Naive thymus-derived CD4-positive, alpha-beta T cell (primary cell): ENCODE measurements at regions of chr12 and their contacts with region 1.

Region 1: DNA sequence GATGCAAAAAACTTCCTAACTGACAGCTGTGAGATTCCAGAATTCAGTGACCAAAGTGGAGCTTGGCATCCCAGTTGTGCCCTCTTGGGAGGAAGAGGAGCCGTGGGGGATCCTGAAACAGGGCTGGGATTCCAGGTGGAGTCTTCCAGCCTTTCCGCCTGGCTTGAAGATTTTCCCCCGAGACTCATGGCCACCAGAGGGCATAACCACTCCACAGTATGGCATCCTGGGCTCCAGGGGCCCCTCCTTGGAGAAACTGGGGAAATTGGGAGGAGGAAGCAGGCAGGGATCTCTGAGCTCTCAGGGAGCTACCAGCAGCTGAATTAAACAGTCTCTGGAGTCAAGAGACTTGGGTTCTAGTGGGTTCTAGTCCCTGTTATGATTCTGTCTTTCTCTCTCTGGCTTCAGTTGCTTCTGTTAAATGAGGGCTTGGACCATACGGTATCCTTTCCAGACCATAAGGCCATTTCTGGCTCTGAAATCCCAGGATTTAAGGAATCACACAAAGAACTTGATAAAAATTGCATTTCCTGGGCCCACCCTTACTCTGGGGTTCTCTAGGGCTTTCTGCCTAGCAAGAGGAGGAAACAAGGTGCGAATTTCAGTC is 2.6 kb upstream of the TAMALIN start:
- DNase-seq: no peak
- ATAC-seq: no peak
- H3K4me3 ChIP-seq: no peak overlapping the region
- H3K4me3 Mint-ChIP-seq: no peak overlapping the region
- H3K27ac ChIP-seq: no peak overlapping the region
- H3K27ac Mint-ChIP-seq: peak overlapping the region in 2 of 9 donors; percentile 24 to 67
- H3K4me1 ChIP-seq: peaks cover 0 to 11% of the 10 kb centered on the region in 2 donors
- H3K4me1 Mint-ChIP-seq: peaks cover 6 to 27% (median 19%) of the 10 kb centered on the region in 7 donors
- H3K27me3 ChIP-seq: no peaks in the 10 kb centered on the region
- H3K27me3 Mint-ChIP-seq: peaks cover 0 to 45% (median 0%) of the 10 kb centered on the region in 5 donors

Region 2: DNA sequence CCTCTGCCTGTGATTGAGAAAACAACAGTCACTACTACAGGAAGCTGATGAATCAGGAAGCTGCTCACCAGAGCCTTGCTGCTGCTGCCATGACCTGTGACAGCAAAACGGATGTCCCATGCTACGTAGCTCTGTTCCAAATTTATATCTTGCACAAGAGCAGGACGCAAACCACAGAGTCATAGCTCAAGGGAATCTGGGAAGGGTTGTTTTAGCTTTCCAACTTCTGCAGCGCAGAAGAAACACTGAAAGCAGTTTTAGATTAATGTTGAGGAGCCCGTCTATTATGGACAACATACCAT is 118.2 kb before region 1 on chr12:
- CTCF ChIA-PET with region 1: no interaction called
- POLR2A ChIA-PET with region 1: no interaction called
- intact Hi-C with region 1: loop called in 1 of 2 experiments (anchors 1 kb)
- DNase-seq: peak in 8 of 9 donors; percentile 27 to 71 (median 64)
- ATAC-seq: peak; percentile 95
- H3K4me3 ChIP-seq: peak overlapping the region; percentile 25
- H3K4me3 Mint-ChIP-seq: peak overlapping the region; percentile 8 to 77 (median 62)
- H3K27ac ChIP-seq: peak overlapping the region; percentile 1
- H3K27ac Mint-ChIP-seq: peak overlapping the region; percentile 86 to 97 (median 95)
- H3K4me1 ChIP-seq: peaks cover 0 to 5% of the 10 kb centered on the region in 2 donors
- H3K4me1 Mint-ChIP-seq: peaks cover 12 to 22% (median 16%) of the 10 kb centered on the region in 7 donors
- H3K27me3 ChIP-seq: no peaks in the 10 kb centered on the region
- H3K27me3 Mint-ChIP-seq: peaks cover 0 to 2% (median 0%) of the 10 kb centered on the region in 5 donors

Region 3: GRCh38 chr12:52139552-52140062 is 135.5 kb after region 1 on chr12:
- CTCF ChIA-PET with region 1: no interaction called
- POLR2A ChIA-PET with region 1: no interaction called
- intact Hi-C with region 1: no loop called
- DNase-seq: peak in 4 of 9 donors; percentile 25 to 39 (median 34)
- ATAC-seq: peak; percentile 89
- H3K4me3 ChIP-seq: no peak overlapping the region
- H3K4me3 Mint-ChIP-seq: no peak overlapping the region
- H3K27ac ChIP-seq: no peak overlapping the region
- H3K27ac Mint-ChIP-seq: no peak overlapping the region
- H3K4me1 ChIP-seq: no peaks in the 10 kb centered on the region
- H3K4me1 Mint-ChIP-seq: peaks cover 0 to 3% (median 0%) of the 10 kb centered on the region in 7 donors
- H3K27me3 ChIP-seq: no peaks in the 10 kb centered on the region
- H3K27me3 Mint-ChIP-seq: peaks cover 0 to 16% (median 10%) of the 10 kb centered on the region in 5 donors